Gastrocnemius medialis (tissue), 4 donors: ENCODE measurements at regions of chr10 and their contacts with region 1.

Region 1: DNA sequence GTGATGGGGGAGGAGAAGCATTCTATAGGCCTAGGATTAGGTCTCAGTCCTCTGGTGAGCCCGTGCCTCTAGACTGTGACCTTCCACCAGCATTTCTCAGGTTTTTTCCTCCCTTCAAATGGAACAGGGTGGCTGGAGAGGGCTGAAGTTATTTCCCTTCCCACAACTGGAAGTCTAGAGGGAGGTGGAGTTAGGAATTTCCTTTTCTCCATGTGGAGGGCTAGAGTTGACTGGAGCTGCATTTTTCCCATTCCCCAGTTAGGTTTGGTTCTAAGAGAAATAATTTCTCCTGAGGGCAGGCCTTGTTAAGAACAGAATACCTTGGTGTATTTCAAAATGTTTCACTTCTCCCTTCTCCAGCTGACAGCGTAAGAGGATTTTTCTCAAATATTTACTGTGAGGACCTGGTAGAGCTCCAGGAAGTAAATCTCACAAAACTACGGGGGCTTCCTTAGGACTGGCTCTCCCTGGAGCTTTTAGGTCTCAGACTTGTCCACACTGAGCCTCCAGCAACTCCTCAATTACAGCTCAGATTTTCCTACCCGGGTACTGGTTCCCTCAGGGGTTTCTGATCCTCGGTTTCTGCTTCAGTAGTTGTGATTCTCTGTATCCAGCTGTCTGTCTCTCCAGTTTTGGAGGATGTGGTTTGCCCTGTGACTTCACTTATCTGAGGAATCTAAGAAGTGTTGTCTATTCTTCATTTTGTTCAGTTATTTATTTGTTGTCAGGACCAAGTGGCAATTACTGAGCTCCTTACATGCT is 6.0 kb upstream of the REEP3 start:
- DNase-seq: no peak
- ATAC-seq: no peak
- H3K4me3 ChIP-seq: peak overlapping the region in 1 of 4 donors; percentile 15
- H3K27ac ChIP-seq: peak overlapping the region; percentile 34 to 68 (median 63)
- H3K4me1 ChIP-seq: peaks cover 47 to 56% of the 10 kb centered on the region in 2 donors
- H3K27me3 ChIP-seq: no peaks in the 10 kb centered on the region
- CTCF ChIP-seq: no peak
- POLR2A ChIP-seq: no peak

Region 2: GRCh38 chr10:63465293-63466143 is 49.7 kb before region 1 on chr10 and contains the start of gene JMJD1C:
- in situ Hi-C with region 1: loop called in 1 of 4 experiments (anchors 5 kb)
- intact Hi-C with region 1: loop called (anchors 2 kb)
- DNase-seq: peak; percentile 48 to 78
- ATAC-seq: peak; percentile 84 to 88
- H3K4me3 ChIP-seq: peak within 1 kb of the TSS; percentile 82 to 95 (median 92)
- H3K27ac ChIP-seq: peak within 1 kb of the TSS; percentile 93 to 95 (median 94)
- H3K4me1 ChIP-seq: peaks cover 26% of the 10 kb centered on the region in 2 donors
- H3K27me3 ChIP-seq: no peaks in the 10 kb centered on the region
- CTCF ChIP-seq: peak in 2 of 5 experiments; percentile 13 to 20
- POLR2A ChIP-seq: peak; percentile 79 to 82
- total RNA-seq, gene JMJD1C: 22.5 to 74.1 (median 46.9) TPM

Region 3: DNA sequence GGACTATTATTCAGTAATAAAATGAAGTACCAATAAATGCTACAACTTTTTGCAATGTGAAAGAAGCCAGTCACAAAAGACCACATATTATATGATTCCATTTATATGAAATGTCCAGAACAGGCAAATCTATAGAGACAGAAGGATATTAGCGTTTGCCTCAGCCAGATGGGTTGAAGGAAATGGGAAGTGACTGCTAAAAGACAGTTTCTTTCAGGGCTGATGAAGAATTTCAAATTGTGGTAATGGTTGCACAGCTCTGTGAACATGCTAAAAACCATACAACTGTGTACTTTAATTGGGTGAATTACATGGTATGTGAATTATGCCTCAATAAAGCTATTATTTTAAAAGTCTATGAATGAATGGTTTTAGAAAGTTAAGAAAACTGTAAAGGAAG is 17.9 kb before region 1 on chr10:
- in situ Hi-C with region 1: no loop called
- intact Hi-C with region 1: loop called (anchors 2 kb)
- DNase-seq: no peak
- ATAC-seq: no peak
- H3K4me3 ChIP-seq: no peak overlapping the region
- H3K27ac ChIP-seq: no peak overlapping the region
- H3K4me1 ChIP-seq: peaks cover 6 to 13% of the 10 kb centered on the region in 2 donors
- H3K27me3 ChIP-seq: no peaks in the 10 kb centered on the region
- CTCF ChIP-seq: no peak
- POLR2A ChIP-seq: no peak

Region 4: GRCh38 chr10:63573068-63573697 is 58.0 kb after region 1 on chr10:
- in situ Hi-C with region 1: no loop called
- intact Hi-C with region 1: no loop called
- DNase-seq: no peak
- ATAC-seq: peak; percentile 24 to 81
- H3K4me3 ChIP-seq: peak overlapping the region; percentile 1 to 14 (median 6)
- H3K27ac ChIP-seq: peak overlapping the region; percentile 56 to 67 (median 62)
- H3K4me1 ChIP-seq: peaks cover 32 to 46% of the 10 kb centered on the region in 2 donors
- H3K27me3 ChIP-seq: no peaks in the 10 kb centered on the region
- CTCF ChIP-seq: no peak
- POLR2A ChIP-seq: no peak